Activated T-helper 1 cell treated with anti-CD3 and anti-CD28 coated beads, Interleukin-12 subunit alpha, Interleukin-12 subunit beta, Interleukin-2, Interleukin-4 antibody, amounts not matched to agents 30 ng/mL and 10 ng/mL and 1 ng/mL, durations not matched to agents 14 hours and 24 hours and 36 hours (primary cell): ENCODE measurements at regions of chr6 and their contacts with region 1.

Region 1: GRCh38 chr6:158853072-158853871 is 34.1 kb upstream of the EZR start:
- DNase-seq: peak; percentile 85
- H3K4me3 Mint-ChIP-seq: no peak overlapping the region
- H3K27ac Mint-ChIP-seq: no peak overlapping the region
- H3K4me1 Mint-ChIP-seq: peaks cover 20% of the 10 kb centered on the region
- H3K27me3 Mint-ChIP-seq: no peaks in the 10 kb centered on the region

Region 2: DNA sequence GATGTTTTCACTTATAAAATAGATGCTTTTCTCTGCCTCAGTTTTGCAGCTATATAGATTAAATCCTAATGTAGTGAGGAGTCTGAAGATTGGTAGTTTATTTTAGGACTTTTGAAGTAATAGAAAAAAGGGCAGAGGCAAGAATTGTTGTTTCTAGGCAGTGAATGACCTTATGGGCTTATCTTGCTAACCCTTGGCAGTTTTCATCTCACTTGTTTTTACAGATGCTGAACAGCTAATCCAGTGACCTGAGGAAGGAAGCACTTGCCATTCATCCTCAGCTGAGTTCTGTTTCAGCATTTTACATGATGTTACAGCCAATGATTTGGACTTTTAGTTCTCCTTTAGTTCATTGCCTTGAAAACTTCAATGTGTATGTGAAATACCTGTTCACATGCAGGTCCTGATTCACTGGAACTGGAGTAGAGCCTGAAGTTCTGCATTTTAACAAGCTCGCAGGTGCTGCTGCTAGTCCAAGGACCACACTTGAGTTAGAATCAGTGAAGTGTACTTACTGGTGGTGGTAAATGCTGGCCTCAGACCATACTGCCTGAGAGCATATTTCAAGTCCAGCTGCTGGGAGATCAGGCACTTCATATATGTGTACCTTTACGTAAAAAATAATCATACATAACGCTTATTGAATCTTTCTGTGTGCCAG is 454.1 kb before region 1 on chr6:
- intact Hi-C with region 1: no loop called
- DNase-seq: no peak
- H3K4me3 Mint-ChIP-seq: no peak overlapping the region
- H3K27ac Mint-ChIP-seq: no peak overlapping the region
- H3K4me1 Mint-ChIP-seq: no peaks in the 10 kb centered on the region
- H3K27me3 Mint-ChIP-seq: peaks cover 1% of the 10 kb centered on the region

Region 3: DNA sequence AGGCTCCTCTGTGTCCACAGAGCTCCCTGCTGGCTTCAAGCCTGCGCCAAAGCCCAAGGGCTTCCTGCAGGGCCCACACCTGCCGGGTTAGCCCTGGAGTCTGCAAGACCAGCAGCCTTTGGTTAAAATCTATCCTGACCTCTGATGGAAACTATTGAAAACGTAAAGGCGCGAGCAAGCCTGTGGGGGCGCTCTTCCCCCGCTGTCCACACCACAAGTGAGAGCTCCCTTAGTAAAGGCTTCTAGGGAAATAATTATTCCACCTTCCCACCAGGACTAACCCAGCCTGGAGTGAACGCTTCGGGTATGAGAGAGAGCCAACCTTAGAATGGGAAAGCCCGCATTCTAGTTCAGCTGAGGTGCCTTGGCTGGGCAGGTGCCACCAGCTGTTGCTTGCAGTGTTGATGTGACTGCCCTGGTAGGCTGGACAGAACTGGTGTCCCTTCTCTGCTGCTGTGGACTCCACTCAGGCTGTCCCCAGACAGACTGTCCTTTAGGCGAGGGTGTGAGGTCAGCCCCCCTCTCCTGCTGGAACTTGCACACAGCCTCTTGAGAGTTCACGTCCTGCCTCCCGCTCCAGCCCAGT is 134.7 kb before region 1 on chr6:
- intact Hi-C with region 1: no loop called
- DNase-seq: no peak
- H3K4me3 Mint-ChIP-seq: no peak overlapping the region
- H3K27ac Mint-ChIP-seq: no peak overlapping the region
- H3K4me1 Mint-ChIP-seq: peaks cover 69% of the 10 kb centered on the region
- H3K27me3 Mint-ChIP-seq: peaks cover 2% of the 10 kb centered on the region

Region 4: GRCh38 chr6:158869826-158870648 is 16.8 kb after region 1 on chr6:
- intact Hi-C with region 1: loop called (anchors 1 kb)
- DNase-seq: peak; percentile 94
- H3K4me3 Mint-ChIP-seq: peak overlapping the region; percentile 87
- H3K27ac Mint-ChIP-seq: peak overlapping the region; percentile 99
- H3K4me1 Mint-ChIP-seq: peaks cover 37% of the 10 kb centered on the region
- H3K27me3 Mint-ChIP-seq: peaks cover 5% of the 10 kb centered on the region

Region 5: GRCh38 chr6:159017757-159018559 is 164.7 kb after region 1 on chr6:
- intact Hi-C with region 1: loop called (anchors 1 kb)
- DNase-seq: no peak
- H3K4me3 Mint-ChIP-seq: peak overlapping the region; percentile 38
- H3K27ac Mint-ChIP-seq: peak overlapping the region; percentile 92
- H3K4me1 Mint-ChIP-seq: peaks cover 29% of the 10 kb centered on the region
- H3K27me3 Mint-ChIP-seq: no peaks in the 10 kb centered on the region

Region 6: DNA sequence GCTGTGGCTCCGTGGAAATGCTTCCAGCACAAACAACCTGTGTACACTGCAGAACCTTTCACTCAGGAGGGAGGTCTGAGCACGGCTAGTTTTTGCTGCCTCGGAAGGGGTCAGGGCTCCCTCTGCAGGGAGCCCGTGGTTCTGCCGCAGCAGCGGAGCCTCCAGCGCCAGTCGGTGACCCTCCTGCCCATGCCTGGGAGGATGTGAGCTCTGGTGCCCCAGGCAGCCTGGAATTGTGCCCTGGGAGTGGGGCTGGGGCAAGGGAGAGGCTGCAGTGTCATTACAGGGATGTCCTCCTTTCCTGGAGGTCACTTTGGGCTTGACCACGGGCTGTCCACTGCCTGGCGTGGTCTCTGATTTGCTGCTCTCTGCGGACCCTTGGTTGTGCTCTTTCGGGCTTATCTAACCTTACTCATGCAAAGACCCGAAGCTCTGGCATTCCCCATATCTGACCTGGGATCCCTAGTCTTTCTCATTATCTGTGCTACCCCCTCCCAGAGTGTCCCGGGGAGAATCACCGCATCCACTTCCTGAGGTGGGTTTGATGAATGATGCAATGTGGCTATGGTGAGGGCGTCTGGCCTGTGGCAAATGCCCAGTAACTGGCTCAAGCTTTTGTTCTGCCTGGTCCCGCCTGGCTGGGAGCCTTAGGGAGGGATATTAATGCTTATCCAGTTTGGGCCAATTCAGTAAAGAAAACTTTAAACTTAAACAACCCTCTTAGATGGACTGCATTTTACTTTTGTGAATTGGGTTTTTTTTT is 251.1 kb after region 1 on chr6:
- intact Hi-C with region 1: loop called (anchors 10 kb)
- DNase-seq: peak; percentile 69
- H3K4me3 Mint-ChIP-seq: peak overlapping the region; percentile 67
- H3K27ac Mint-ChIP-seq: peak overlapping the region; percentile 63
- H3K4me1 Mint-ChIP-seq: peaks cover 80% of the 10 kb centered on the region
- H3K27me3 Mint-ChIP-seq: no peaks in the 10 kb centered on the region

Region 7: DNA sequence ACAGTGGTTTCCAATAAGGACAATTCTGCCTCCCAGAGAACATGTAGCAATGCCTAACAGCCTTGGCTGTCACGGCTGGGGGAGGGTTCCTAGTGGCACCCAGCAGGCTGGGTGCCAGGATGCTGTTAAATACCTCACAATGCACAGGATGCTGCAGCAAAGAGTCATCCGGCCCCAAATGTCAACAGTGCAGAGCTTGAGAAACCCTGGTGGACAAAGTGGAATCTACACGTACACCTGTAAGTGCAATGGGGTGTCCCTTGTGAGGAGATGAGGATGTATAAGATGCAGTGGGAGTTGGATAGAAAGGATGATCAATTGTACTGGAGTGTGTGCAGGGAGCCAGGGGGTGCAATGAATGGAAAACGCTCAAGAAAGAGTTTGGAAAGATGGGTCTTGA is 458.3 kb after region 1 on chr6:
- intact Hi-C with region 1: no loop called
- DNase-seq: no peak
- H3K4me3 Mint-ChIP-seq: no peak overlapping the region
- H3K27ac Mint-ChIP-seq: no peak overlapping the region
- H3K4me1 Mint-ChIP-seq: no peaks in the 10 kb centered on the region
- H3K27me3 Mint-ChIP-seq: peaks cover 5% of the 10 kb centered on the region

Region 8: GRCh38 chr6:159434410-159434809 is 581.1 kb after region 1 on chr6:
- intact Hi-C with region 1: no loop called
- DNase-seq: no peak
- H3K4me3 Mint-ChIP-seq: no peak overlapping the region
- H3K27ac Mint-ChIP-seq: no peak overlapping the region
- H3K4me1 Mint-ChIP-seq: no peaks in the 10 kb centered on the region
- H3K27me3 Mint-ChIP-seq: no peaks in the 10 kb centered on the region